ENCODE measurements at regions of chr10 and their contacts with region 1.

Region 1: GRCh38 chr10:60434418-60435046 is 44.9 kb upstream of the ANK3 start:
- DNase-seq: no peak
- ATAC-seq: peak; percentile 51 to 74

Region 2: GRCh38 chr10:60099998-60100747 is 334.4 kb before region 1 on chr10:
- intact Hi-C with region 1: no loop called
- DNase-seq: no peak
- ATAC-seq: peak; percentile 70 to 79

Region 3: GRCh38 chr10:60114765-60115586 is 319.6 kb before region 1 on chr10:
- intact Hi-C with region 1: loop called in 1 of 2 experiments (anchors 5 kb)
- DNase-seq: no peak
- ATAC-seq: peak; percentile 50 to 68

Region 4: GRCh38 chr10:60208676-60209269 is 225.8 kb before region 1 on chr10:
- intact Hi-C with region 1: loop called in 1 of 2 experiments (anchors 2 kb)
- DNase-seq: no peak
- ATAC-seq: peak; percentile 35 to 41

Region 5: GRCh38 chr10:60237977-60238758 is 196.4 kb before region 1 on chr10:
- intact Hi-C with region 1: loop called (anchors 10 kb)
- DNase-seq: no peak
- ATAC-seq: peak; percentile 83 to 87